Esophagus muscularis mucosa (tissue), 4 donors: ENCODE measurements at regions of chr4 and their contacts with region 1.

Region 1: GRCh38 chr4:87679449-87680169 is 29.5 kb downstream of the DMP1 start:
- DNase-seq: no peak
- H3K4me3 ChIP-seq: no peak overlapping the region
- H3K27ac ChIP-seq: no peak overlapping the region
- H3K4me1 ChIP-seq: peaks cover 0 to 6% (median 3%) of the 10 kb centered on the region in 4 donors
- H3K27me3 ChIP-seq: no peaks in the 10 kb centered on the region
- CTCF ChIP-seq: peak; percentile 73 to 78 (median 74)
- EP300 ChIP-seq: no peak
- POLR2A ChIP-seq: no peak

Region 2: DNA sequence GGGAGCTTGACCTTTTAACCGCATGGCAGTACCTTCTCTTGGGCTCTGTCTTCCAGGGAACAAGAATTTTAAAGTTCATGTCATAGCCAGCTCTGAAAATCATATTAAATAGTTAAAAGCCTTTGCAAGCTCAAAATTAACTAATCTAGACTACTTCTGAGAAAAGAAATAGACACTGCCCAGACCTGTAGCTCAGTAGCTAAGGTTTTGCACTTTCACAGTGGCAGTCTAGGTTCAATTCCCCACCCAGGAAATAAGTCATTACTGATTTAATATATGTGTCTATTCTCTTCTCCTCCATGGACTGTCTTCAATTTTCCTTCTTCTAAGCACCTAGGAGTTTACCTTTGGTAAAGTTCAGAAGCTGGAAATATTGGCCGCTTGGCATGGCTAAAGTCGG is 316.0 kb before region 1 on chr4:
- intact Hi-C with region 1: loop called (anchors 10 kb)
- DNase-seq: no peak
- H3K4me3 ChIP-seq: no peak overlapping the region
- H3K27ac ChIP-seq: no peak overlapping the region
- H3K4me1 ChIP-seq: no peaks in the 10 kb centered on the region
- H3K27me3 ChIP-seq: no peaks in the 10 kb centered on the region
- CTCF ChIP-seq: no peak
- EP300 ChIP-seq: no peak
- POLR2A ChIP-seq: no peak

Region 3: DNA sequence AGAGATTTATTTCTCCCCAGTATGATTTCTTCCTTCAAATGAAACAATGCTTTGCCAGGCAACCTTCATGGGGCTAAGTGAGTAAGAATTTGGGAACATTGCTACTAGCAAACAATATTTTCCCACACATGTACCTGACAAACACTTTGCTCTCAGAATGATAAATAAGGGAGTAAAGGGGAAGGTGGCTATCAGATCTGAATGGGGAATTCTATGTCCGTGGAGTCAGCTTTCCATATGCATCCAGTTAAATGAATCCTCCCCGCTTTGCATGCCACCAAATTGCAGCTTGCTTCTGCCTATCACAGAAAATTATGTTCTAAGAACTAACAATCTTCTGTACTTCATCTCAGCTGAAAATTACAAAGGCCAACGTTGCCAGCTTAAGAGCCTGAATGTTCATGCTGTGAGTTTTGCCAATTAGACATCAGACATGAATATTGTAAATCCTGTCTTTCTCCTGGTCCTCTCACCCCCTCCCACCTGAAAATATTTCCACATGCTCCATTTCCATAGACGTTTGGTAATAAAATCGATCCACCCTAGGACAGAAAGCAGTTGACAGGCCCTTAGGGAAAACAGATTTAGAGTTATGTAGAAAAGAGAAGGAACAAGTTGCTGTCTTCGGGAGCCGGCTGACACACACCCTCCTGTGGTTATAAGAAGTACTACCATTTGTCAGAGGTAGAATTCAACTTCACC is 159.4 kb after region 1 on chr4:
- intact Hi-C with region 1: loop called (anchors 2 kb)
- DNase-seq: no peak
- H3K4me3 ChIP-seq: no peak overlapping the region
- H3K27ac ChIP-seq: peak overlapping the region in 1 of 4 donors; percentile 33
- H3K4me1 ChIP-seq: peaks cover 8 to 9% (median 8%) of the 10 kb centered on the region in 4 donors
- H3K27me3 ChIP-seq: no peaks in the 10 kb centered on the region
- CTCF ChIP-seq: peak; percentile 73 to 80 (median 74)
- EP300 ChIP-seq: no peak
- POLR2A ChIP-seq: no peak

Region 4: DNA sequence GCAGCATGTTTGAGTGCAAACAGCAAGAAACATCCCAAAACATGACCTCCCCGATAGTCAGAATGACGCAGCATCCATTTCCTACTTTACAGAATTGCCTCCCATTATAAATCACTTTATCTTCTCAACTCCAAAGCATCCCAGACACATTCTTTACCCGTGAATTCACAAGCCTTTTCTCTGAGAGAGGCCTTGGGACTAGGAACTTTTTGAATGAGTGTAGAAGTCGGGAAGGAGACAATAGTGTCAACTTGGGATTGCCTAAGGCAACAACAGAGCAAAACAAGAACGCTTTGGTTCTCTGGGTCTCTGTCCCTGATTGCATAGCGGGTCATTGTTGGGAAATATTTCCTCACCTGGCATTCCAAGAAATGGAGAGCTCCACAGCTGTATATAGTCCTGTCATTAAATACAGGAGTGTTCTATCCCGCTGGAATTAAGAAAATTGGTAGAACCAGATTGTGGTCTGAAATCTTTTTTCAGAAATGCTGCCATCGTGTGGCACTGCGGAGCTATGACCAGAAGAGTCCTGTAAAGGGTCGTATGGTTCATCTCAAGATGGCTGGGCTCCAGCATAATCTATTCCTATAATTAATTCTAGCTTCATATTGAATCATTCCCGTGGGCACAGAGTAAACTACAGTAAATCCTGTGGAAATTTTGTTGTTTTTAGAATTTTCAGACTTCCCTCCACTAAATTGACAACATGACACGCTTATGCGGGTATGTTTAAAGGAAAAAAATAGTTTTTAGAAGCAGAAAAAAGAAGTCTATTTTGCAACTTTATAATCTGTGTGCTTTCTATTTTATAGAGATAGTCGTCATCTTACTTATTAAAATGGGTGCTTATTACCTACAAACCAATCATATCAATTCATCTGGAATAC is 293.9 kb after region 1 on chr4:
- intact Hi-C with region 1: loop called (anchors 10 kb)
- DNase-seq: no peak
- H3K4me3 ChIP-seq: peak overlapping the region in 3 of 4 donors; percentile 19 to 33 (median 19)
- H3K27ac ChIP-seq: peak overlapping the region in 1 of 4 donors; percentile 2
- H3K4me1 ChIP-seq: peaks cover 0 to 7% (median 3%) of the 10 kb centered on the region in 4 donors
- H3K27me3 ChIP-seq: no peaks in the 10 kb centered on the region
- CTCF ChIP-seq: peak; percentile 74 to 88 (median 85)
- EP300 ChIP-seq: no peak
- POLR2A ChIP-seq: no peak